Activated naive CD4-positive, alpha-beta T cell treated with anti-CD3 and anti-CD28 coated beads for 36 hours (primary cell): ENCODE measurements at regions of chr11 and their contacts with region 1.

Region 1: DNA sequence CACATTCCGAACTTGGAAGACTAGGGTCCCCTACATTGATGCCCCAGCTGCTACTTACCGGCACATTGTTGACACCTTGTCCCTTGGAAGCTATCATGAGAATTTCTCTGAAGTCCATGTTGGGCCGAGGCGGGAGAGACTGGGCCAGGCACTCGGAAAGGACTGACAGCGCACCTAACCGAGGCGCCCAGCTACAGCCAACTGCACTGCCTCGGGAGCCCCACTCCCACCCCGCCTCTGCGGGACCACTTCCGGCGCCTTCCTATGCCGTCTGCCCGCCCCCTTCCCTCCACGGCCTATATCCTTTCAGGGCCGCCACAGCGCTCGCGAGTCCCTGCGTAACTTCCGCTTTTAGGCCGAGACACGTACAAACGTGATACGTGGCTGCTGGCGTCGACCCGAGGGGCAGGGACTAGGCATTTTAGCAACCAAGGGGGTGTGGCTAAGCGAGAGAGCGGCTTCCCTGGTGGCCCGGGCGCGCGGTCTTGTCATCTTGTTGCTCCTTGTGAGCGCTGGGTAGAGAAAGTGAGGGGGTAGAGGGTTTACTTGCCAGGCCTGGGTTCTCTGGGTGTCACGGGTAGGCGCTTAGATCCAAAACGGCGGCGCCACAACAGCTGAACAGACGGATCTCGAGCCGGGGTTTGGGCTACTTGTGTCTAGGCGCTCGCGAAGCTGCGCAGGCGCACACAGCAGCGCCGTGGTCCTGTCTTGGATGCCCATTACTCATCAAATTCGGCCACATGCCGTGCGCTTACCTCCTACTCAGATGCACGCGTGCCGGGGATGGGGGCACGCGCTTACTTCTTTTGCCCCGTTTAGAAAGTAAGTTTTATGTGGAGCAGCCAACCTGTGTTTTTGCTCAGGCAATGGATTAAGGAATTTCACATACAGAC is at the start of gene SPTY2D1:
- DNase-seq: peak; percentile 99
- H3K4me3 Mint-ChIP-seq: peak within 1 kb of the TSS; percentile 87
- H3K27ac Mint-ChIP-seq: peak within 1 kb of the TSS; percentile 96
- H3K4me1 Mint-ChIP-seq: peaks cover 30% of the 10 kb centered on the region
- H3K27me3 Mint-ChIP-seq: no peaks in the 10 kb centered on the region
- total RNA-seq, gene SPTY2D1: 13.9 to 15.0 TPM

Region 2: GRCh38 chr11:18321980-18322711 is 312.2 kb before region 1 on chr11 and contains the starts of genes GTF2H1 and HPS5:
- CTCF ChIA-PET with region 1: no interaction called
- intact Hi-C with region 1: loop called (anchors 1 kb)
- DNase-seq: peak; percentile 98
- H3K4me3 Mint-ChIP-seq: peak within 1 kb of the TSS; percentile 98
- H3K27ac Mint-ChIP-seq: peak within 1 kb of the TSS; percentile 100
- H3K4me1 Mint-ChIP-seq: peaks cover 64% of the 10 kb centered on the region
- H3K27me3 Mint-ChIP-seq: no peaks in the 10 kb centered on the region
- total RNA-seq, gene GTF2H1: 33.4 to 34.1 TPM
- total RNA-seq, gene HPS5: 21.7 to 21.9 TPM

Region 3: GRCh38 chr11:18540207-18541009 is 94.0 kb before region 1 on chr11:
- CTCF ChIA-PET with region 1: interaction called, 11 read pairs
- intact Hi-C with region 1: loop called (anchors 5 kb)
- DNase-seq: no peak
- H3K4me3 Mint-ChIP-seq: no peak overlapping the region
- H3K27ac Mint-ChIP-seq: no peak overlapping the region
- H3K4me1 Mint-ChIP-seq: peaks cover 6% of the 10 kb centered on the region
- H3K27me3 Mint-ChIP-seq: no peaks in the 10 kb centered on the region

Region 4: GRCh38 chr11:18615628-18616392 is 18.6 kb before region 1 on chr11:
- CTCF ChIA-PET with region 1: interaction called, 5 read pairs
- intact Hi-C with region 1: loop called (anchors 1 kb)
- DNase-seq: no peak
- H3K4me3 Mint-ChIP-seq: no peak overlapping the region
- H3K27ac Mint-ChIP-seq: peak overlapping the region; percentile 78
- H3K4me1 Mint-ChIP-seq: peaks cover 46% of the 10 kb centered on the region
- H3K27me3 Mint-ChIP-seq: no peaks in the 10 kb centered on the region

Region 5: DNA sequence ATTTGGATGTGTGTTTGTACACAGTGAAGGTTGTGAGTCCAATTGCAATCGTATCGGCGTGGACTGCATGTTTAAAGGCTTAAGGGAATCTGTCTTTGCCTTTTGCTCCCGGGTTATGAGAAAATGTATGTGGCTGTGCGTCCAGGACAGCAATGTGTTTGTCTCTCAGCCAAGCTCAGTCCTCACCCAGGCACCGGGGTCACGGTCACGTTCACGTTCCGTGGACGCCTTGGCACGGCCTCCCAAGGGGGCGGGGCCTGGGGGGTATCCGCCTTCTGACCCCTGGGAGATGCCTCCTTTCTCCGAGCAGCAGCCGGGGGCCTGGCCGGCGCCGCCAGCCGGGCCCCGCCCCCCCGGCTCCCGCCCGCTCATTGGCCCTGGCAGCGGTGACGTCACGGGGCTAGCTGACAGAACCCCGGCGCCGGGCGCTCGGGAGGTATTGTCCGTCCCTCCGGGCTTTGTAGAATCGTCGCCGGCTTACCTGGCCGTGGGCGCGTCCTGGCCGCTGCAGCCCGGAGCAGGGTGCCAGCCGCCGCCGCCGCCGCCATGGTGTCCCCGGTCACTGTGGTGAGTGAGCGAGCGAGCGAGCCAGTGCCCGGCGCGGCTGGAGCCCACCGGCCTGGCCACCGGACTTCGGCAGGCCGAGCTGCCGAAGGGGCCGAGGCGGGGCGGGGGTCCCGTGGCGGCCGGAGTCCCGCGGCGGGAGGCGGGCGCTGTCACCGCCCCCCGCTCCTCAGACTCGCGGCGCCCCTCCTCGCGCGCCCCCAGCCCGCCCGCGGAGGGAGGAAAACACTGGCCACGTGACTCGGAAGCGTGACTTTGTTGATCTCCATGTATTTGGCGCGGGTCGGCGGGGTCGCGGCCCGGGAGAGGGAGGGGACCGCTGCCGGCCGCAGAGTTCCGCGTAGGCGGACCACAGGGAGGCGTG is 64.2 kb after region 1 on chr11 and contains the start of gene TMEM86A:
- CTCF ChIA-PET with region 1: no interaction called
- intact Hi-C with region 1: loop called (anchors 1 kb)
- DNase-seq: peak; percentile 88
- H3K4me3 Mint-ChIP-seq: peak within 1 kb of the TSS; percentile 69
- H3K27ac Mint-ChIP-seq: no peak within 1 kb of the TSS
- H3K4me1 Mint-ChIP-seq: peaks cover 7% of the 10 kb centered on the region
- H3K27me3 Mint-ChIP-seq: peaks cover 3% of the 10 kb centered on the region
- total RNA-seq, gene TMEM86A: 0.05 to 0.15 TPM